ENCODE measurements at regions of chr19 and their contacts with region 1.

Region 1: DNA sequence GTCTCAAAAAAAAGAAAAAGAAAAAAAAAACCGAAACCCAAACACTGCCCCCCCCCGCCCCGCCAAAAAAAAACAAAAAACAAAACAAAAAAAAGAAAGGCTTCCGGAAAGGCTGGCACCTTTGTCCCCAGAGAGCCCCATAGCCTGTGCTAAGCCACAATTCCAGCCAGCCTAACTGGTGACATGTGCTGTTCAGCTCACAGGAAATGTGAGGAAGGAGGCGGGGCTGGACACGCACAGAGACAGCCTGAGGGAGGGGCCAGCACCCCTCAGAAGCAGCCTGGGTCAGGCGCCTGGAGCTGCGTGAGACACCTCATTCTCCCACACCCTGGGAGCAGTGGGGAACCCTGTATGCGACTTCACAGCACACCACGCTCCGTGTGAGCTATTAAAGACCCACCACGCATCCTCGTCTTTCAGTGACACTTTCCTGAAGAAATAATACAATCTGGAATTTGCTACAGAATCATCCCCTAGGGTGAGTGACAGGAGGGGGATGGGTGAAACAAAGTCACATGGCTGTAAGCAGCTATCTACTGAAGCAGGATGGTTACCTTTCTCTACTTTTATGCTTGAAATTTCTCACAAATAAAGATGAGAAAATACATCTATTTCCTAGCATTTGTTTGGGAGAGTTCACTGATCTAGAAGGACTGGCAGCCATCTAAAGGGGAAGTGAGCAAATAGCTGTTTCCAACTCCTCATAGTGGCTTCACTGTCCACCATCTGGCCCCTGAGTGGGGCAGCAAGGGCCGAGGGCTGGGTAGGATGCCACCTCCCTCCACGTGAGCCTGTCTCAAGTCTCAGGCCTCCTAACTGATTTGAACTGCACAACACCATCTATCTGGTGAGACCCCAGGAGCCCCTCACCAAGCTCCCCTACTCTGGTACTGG is 12.3 kb upstream of the SLC35E1 start:
- DNase-seq: peak; percentile 97
- H3K4me3 Mint-ChIP-seq: peak overlapping the region; percentile 87
- H3K27ac Mint-ChIP-seq: peak overlapping the region; percentile 96
- H3K4me1 Mint-ChIP-seq: peaks cover 67% of the 10 kb centered on the region
- H3K27me3 Mint-ChIP-seq: no peaks in the 10 kb centered on the region

Region 2: DNA sequence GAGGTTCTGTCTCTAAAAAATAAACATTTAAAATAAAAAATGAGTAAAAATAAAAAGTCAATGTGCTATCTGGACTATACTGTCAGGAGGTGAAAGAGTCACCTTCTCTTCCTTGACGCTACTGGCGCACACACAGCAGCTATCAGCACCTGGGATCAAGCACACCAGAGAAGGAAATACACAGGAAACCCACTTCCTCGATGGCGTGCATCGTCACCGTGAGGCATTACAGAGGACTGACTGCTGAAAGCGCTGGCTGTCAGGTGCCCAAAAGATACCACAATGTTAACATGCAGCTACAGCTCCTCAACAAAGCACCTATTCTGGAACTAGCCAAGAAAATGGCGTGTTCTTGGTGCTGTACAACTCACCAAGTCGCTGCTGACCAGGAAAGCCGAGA is 18.3 kb before region 1 on chr19:
- intact Hi-C with region 1: loop called (anchors 1 kb)
- DNase-seq: peak; percentile 94
- H3K4me3 Mint-ChIP-seq: peak overlapping the region; percentile 70
- H3K27ac Mint-ChIP-seq: peak overlapping the region; percentile 94
- H3K4me1 Mint-ChIP-seq: peaks cover 33% of the 10 kb centered on the region
- H3K27me3 Mint-ChIP-seq: no peaks in the 10 kb centered on the region

Region 3: GRCh38 chr19:16572332-16573211 is 11.9 kb before region 1 on chr19 and contains the start of gene SLC35E1:
- intact Hi-C with region 1: loop called (anchors 1 kb)
- DNase-seq: peak; percentile 98
- H3K4me3 Mint-ChIP-seq: peak within 1 kb of the TSS; percentile 93
- H3K27ac Mint-ChIP-seq: peak within 1 kb of the TSS; percentile 88
- H3K4me1 Mint-ChIP-seq: peaks cover 39% of the 10 kb centered on the region
- H3K27me3 Mint-ChIP-seq: no peaks in the 10 kb centered on the region
- total RNA-seq, gene SLC35E1: 60.2 and 65.0 TPM in 2 replicates

Region 4: DNA sequence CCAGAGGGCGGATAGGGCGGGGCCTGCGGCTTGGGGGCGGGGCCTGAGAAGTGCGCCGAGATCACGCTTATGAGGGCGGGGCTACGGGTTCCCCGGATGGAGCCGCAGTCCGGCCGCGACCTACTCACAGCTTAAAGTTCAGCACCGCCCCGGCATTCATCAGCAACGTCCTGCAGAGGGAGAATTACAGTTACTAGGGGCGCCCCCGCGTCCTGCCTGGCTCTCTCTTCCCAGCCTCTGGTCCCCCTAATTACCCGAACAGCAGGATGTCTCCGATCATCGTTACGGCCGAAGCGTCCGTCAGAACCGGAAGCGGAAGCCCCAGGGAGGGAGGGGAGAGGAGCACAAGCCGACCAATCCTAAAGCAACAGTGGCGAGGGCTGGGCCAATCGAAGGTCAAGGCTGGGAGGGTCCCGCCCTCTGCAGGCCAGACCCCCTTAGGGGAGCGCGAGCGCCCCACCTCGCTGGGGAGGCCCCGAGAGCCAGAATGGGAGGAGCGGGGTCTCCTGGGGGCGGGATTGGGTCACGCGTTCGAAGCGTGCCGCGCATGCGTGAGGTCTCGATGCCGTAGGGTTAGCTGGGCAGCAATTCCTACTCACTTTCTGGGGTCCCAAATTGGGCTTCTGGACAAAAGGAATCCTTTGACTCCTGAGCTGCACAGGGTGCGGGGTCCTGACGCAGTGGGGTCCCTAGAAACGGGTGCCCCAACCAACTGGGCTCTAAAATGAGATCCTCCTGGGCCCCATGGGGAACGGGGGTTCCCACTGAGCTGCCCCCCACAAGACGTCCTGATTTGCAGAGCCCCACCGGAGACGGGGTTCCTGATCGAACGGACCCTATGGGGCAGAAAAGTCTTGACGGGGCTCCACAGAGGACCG is 75.6 kb after region 1 on chr19 and contains the start of gene SMIM7:
- intact Hi-C with region 1: no loop called
- DNase-seq: peak; percentile 99
- H3K4me3 Mint-ChIP-seq: peak within 1 kb of the TSS; percentile 98
- H3K27ac Mint-ChIP-seq: peak within 1 kb of the TSS; percentile 97
- H3K4me1 Mint-ChIP-seq: peaks cover 18% of the 10 kb centered on the region
- H3K27me3 Mint-ChIP-seq: peaks cover 23% of the 10 kb centered on the region
- total RNA-seq, gene SMIM7: 66.1 and 69.9 TPM in 2 replicates